GM12878 (cell line): ENCODE measurements at regions of chr1 and their contacts with region 1.

Region 1: GRCh38 chr1:215875236-215875635 is 308.1 kb downstream of the KCTD3 start:
- DNase-seq: no peak
- ATAC-seq: no peak
- H3K4me3 ChIP-seq: no peak overlapping the region
- H3K27ac ChIP-seq: no peak overlapping the region
- H3K4me1 ChIP-seq: no peaks in the 10 kb centered on the region
- H3K27me3 ChIP-seq: no peaks in the 10 kb centered on the region
- CTCF ChIP-seq: no peak
- EP300 ChIP-seq: no peak
- POLR2A ChIP-seq: no peak
- RAD21 ChIP-seq: no peak

Region 2: DNA sequence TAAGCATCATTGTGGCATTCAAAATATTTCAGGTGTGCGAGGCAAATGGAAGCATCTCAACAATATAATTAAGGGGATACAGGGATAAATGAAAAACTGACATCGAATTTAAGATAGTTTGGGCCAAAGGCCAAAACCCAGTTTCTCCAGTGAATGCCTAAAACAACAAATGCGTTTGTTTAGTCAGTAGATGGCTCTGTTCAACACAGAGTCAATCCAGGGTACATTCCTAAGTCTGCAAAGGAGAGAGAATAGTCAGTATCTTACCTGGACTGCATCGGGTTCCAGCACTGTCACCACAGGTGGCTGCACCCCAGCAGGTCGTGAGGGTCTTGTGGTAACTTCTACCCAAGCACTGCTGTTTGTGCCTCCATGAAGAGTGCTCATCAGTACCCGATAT is 12.9 kb after region 1 on chr1:
- CTCF ChIA-PET with region 1: interaction called, 4 read pairs
- POLR2A ChIA-PET with region 1: interaction called, 3 read pairs
- RAD21 ChIA-PET with region 1: interaction called, 8 read pairs
- SMC1A ChIA-PET with region 1: interaction called, 13 read pairs
- in situ Hi-C with region 1: no loop called
- intact Hi-C with region 1: no loop called
- DNase-seq: no peak
- ATAC-seq: 0 out of 3 replicates have a peak, but pooled peaks have one; percentile 25
- H3K4me3 ChIP-seq: no peak overlapping the region
- H3K27ac ChIP-seq: no peak overlapping the region
- H3K4me1 ChIP-seq: no peaks in the 10 kb centered on the region; the same call in 1 of the 2 replicates
- H3K27me3 ChIP-seq: no peaks in the 10 kb centered on the region
- CTCF ChIP-seq: peak in 2 of 3 experiments; percentile 5 to 45; a peak in 2 of 6 replicates
- EP300 ChIP-seq: no peak
- POLR2A ChIP-seq: no peak
- RAD21 ChIP-seq: peak; percentile 50